ENCODE measurements at regions of chr12 and their contacts with region 1.

Region 1: GRCh38 chr12:4997939-4998338 is 45.7 kb upstream of the KCNA5 start:
- DNase-seq: peak in 1 of 2 donors; percentile 17
- ATAC-seq: peak; percentile 32 to 90 (median 80)
- H3K4me3 ChIP-seq: no peak overlapping the region
- H3K27ac ChIP-seq: peak overlapping the region in 5 of 10 donors; percentile 28 to 55 (median 31)
- H3K4me1 ChIP-seq: peaks cover 0 to 12% (median 9%) of the 10 kb centered on the region in 9 donors
- H3K27me3 ChIP-seq: peaks cover 0 to 24% (median 8%) of the 10 kb centered on the region in 7 donors
- CTCF ChIP-seq: no peak

Region 2: DNA sequence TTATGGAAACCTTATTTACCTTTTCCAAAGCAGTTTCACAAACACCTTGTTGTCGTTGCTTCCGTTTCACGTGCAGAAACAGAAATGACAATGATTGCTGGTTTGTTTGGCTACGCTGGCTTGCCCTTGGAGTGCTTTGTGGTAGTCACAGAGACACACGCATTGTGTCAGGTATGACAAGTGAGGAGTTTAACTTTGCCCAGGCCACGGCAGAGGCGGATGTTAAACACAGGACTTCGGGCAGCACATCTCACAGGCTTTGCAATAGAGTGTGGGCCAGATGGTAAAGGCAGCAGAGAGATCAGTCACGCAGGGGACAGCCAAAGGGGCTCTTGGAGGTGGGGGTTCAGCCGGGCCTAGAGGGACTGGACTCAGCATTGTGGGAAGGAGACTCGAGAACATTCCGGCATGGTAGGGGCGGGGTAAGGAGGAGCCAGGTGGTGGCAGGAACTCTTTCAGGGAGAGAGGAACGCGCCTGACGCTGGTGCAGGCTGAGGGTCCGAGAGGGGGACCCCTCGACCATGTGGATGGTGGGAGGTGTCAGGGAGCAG is 148.1 kb before region 1 on chr12:
- intact Hi-C with region 1: loop called in 4 of 10 experiments (anchors 1 to 5 kb)
- DNase-seq: no peak
- ATAC-seq: no peak
- H3K4me3 ChIP-seq: no peak overlapping the region
- H3K27ac ChIP-seq: no peak overlapping the region
- H3K4me1 ChIP-seq: peaks cover 0 to 3% (median 0%) of the 10 kb centered on the region in 9 donors
- H3K27me3 ChIP-seq: no peaks in the 10 kb centered on the region
- CTCF ChIP-seq: no peak

Region 3: GRCh38 chr12:4857472-4858291 is 140.3 kb before region 1 on chr12:
- intact Hi-C with region 1: loop called (anchors 1 to 5 kb)
- DNase-seq: peak; percentile 65 to 67
- ATAC-seq: peak; percentile 73 to 91 (median 84)
- H3K4me3 ChIP-seq: peak overlapping the region in 6 of 10 donors; percentile 9 to 33 (median 30)
- H3K27ac ChIP-seq: peak overlapping the region in 1 of 10 donors; percentile 8
- H3K4me1 ChIP-seq: peaks cover 2 to 34% (median 19%) of the 10 kb centered on the region in 9 donors
- H3K27me3 ChIP-seq: peaks cover 0 to 15% (median 9%) of the 10 kb centered on the region in 7 donors
- CTCF ChIP-seq: peak; percentile 76 to 91 (median 86)